ENCODE measurements at regions of chr14 and their contacts with region 1.

Region 1: GRCh38 chr14:54642801-54643697 is 76.1 kb downstream of the SAMD4A start:
- DNase-seq: no peak
- H3K4me3 ChIP-seq: no peak overlapping the region
- CTCF ChIP-seq: peak; percentile 7

Region 2: GRCh38 chr14:54617467-54617866 is 25.6 kb before region 1 on chr14:
- CTCF ChIA-PET with region 1: no interaction called
- POLR2A ChIA-PET with region 1: no interaction called
- DNase-seq: no peak
- H3K4me3 ChIP-seq: no peak overlapping the region
- CTCF ChIP-seq: no peak

Region 3: GRCh38 chr14:54627540-54628363 is 15.3 kb before region 1 on chr14:
- CTCF ChIA-PET with region 1: interaction called, 27 read pairs
- POLR2A ChIA-PET with region 1: interaction called, 3 read pairs
- DNase-seq: no peak
- H3K4me3 ChIP-seq: peak overlapping the region; percentile 32
- CTCF ChIP-seq: no peak

Measured in AG04449 (cell line).